ENCODE measurements at regions of chr6 and their contacts with region 1.

Region 1: DNA sequence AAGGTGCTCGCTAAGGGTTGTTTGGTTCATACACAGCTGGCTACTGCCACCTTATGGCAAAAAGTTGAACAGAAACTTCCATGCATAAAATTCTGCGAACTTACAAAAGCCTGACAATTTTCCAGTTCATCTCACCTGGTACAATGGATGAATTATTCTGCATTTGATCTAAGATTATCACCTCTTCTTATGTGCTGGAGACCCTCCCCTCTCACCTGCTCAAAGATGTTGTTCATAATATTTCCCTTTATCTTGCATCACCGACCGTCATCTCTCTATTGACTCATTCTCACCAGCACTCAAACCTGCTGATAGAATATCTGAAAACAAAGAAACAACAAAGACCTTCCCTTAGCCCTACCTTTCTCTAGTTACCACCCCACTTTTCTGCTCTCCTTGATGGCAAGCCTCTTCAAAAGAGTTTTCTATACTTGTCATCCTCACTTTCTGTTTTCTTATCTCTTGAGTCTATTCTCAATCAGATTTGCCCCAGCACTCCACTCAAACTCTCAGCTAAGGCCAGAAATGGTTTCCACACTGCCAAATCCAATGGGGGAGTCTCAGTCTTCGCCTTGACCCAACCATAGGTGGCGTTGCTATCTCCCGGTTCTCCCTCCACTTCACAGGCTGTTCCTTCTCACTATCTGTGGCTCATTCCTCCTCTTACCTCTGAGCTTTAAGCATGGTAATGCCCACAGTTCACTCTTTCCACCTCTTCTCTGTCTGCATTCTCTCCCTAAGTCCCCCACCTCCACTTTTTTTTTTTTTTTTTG is 25.8 kb downstream of the SNRNP48 start:
- DNase-seq: peak; percentile 75
- H3K4me3 Mint-ChIP-seq: peak overlapping the region; percentile 26
- H3K27ac Mint-ChIP-seq: no peak overlapping the region
- H3K4me1 Mint-ChIP-seq: peaks cover 28% of the 10 kb centered on the region
- H3K27me3 Mint-ChIP-seq: no peaks in the 10 kb centered on the region
- CTCF ChIP-seq: peak; percentile 87

Region 2: GRCh38 chr6:6676910-6677441 is 938.8 kb before region 1 on chr6:
- CTCF ChIA-PET with region 1: no interaction called
- POLR2A ChIA-PET with region 1: no interaction called
- intact Hi-C with region 1: loop called (anchors 1 kb)
- DNase-seq: peak; percentile 88
- H3K4me3 Mint-ChIP-seq: no peak overlapping the region
- H3K27ac Mint-ChIP-seq: no peak overlapping the region
- H3K4me1 Mint-ChIP-seq: peaks cover 23% of the 10 kb centered on the region
- H3K27me3 Mint-ChIP-seq: no peaks in the 10 kb centered on the region
- CTCF ChIP-seq: peak; percentile 92

Region 3: DNA sequence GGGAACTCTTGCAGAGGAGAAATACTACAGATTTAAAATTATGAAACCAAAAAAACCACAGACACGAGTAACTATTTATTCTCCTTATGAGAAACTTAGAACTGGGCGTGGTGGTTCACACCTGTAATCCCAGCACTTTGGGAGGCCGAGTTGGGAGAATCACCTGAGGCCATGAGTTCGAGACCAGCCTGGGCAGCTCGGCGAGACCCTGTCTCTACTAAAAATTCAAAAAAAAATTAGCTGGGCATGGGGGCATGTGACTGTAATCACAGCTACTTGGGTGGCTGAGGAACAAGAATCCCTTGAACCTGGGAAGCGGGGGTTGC is 339.6 kb before region 1 on chr6:
- CTCF ChIA-PET with region 1: interaction called, 61 read pairs
- POLR2A ChIA-PET with region 1: interaction called, 6 read pairs
- intact Hi-C with region 1: loop called (anchors 1 kb)
- DNase-seq: no peak
- H3K4me3 Mint-ChIP-seq: no peak overlapping the region
- H3K27ac Mint-ChIP-seq: no peak overlapping the region
- H3K4me1 Mint-ChIP-seq: peaks cover 14% of the 10 kb centered on the region
- H3K27me3 Mint-ChIP-seq: no peaks in the 10 kb centered on the region
- CTCF ChIP-seq: no peak

Region 4: DNA sequence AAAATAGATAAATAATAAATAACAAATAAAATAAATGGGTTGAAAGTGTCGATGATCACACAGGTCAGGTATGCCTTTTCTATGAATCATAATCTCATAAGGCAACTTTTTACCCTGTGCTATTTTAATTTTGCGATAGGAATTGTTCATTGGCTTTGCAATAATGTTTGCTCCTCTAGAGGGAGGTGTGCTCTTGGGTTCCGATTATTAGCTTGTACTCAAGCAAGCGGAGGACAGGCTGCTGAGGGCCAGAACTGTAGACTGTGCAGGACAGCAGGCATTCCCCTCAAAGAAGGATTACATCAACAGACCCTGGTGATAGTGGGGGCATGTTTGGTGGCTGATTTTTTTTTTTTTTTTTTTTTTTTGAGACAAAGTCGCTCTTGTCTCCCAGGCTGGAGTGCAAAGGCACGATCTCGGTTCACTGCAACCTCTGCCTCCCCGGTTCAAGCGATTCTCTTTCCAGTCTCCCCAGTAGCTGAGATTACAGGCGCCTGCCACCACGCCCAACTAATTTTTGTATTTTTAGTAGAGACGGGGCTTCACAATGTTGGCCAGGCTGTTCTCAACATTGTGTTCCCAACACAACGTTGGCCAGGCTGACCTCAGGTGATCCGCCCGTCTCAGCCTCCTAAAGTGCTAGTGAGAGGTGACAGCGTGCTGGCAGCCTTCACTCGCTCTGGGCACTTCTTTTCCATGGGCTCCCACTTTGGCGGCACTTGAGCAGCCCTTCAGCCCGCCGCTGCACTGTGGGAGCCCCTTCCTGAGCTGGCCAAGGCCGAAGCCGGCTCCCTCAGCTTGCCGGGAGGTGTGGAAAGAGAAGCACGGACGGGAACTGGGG is 190.6 kb before region 1 on chr6:
- CTCF ChIA-PET with region 1: no interaction called
- POLR2A ChIA-PET with region 1: no interaction called
- intact Hi-C with region 1: loop called (anchors 1 kb)
- DNase-seq: peak; percentile 80
- H3K4me3 Mint-ChIP-seq: no peak overlapping the region
- H3K27ac Mint-ChIP-seq: no peak overlapping the region
- H3K4me1 Mint-ChIP-seq: no peaks in the 10 kb centered on the region
- H3K27me3 Mint-ChIP-seq: no peaks in the 10 kb centered on the region
- CTCF ChIP-seq: peak; percentile 61

Region 5: GRCh38 chr6:7725849-7726415 is 110.1 kb after region 1 on chr6 and contains the start of gene BMP6:
- CTCF ChIA-PET with region 1: interaction called, 5 read pairs
- POLR2A ChIA-PET with region 1: interaction called, 5 read pairs
- intact Hi-C with region 1: loop called (anchors 5 kb)
- DNase-seq: peak; percentile 90
- H3K4me3 Mint-ChIP-seq: peak within 1 kb of the TSS; percentile 79
- H3K27ac Mint-ChIP-seq: no peak within 1 kb of the TSS
- H3K4me1 Mint-ChIP-seq: peaks cover 8% of the 10 kb centered on the region
- H3K27me3 Mint-ChIP-seq: peaks cover 53% of the 10 kb centered on the region
- CTCF ChIP-seq: no peak
- total RNA-seq, gene BMP6: 0.12 and 0.56 TPM in 2 replicates

Region 6: GRCh38 chr6:7758456-7758855 is 142.7 kb after region 1 on chr6:
- CTCF ChIA-PET with region 1: no interaction called
- POLR2A ChIA-PET with region 1: no interaction called
- intact Hi-C with region 1: no loop called
- DNase-seq: peak; percentile 72
- H3K4me3 Mint-ChIP-seq: no peak overlapping the region
- H3K27ac Mint-ChIP-seq: no peak overlapping the region
- H3K4me1 Mint-ChIP-seq: peaks cover 23% of the 10 kb centered on the region
- H3K27me3 Mint-ChIP-seq: peaks cover 45% of the 10 kb centered on the region
- CTCF ChIP-seq: no peak

Region 7: DNA sequence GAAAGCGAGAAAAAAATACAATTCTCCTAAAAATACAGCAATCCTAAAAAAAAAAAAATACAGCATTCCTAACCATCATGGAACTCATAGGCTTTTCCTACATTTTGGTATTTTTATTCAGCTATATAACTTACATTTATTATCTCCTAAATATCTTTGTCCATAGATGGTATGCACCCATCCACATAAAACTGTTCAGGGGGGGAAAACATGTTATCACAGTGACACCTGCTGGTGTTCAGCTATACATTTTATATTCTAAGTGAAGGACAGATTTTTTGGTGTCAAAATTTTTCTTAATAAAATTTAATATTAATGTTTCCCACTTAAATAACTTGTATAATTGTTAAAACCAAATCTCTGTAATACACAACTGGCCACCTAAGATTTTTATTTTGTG is 390.4 kb after region 1 on chr6:
- CTCF ChIA-PET with region 1: interaction called, 4 read pairs
- POLR2A ChIA-PET with region 1: interaction called, 4 read pairs
- intact Hi-C with region 1: loop called (anchors 5 kb)
- DNase-seq: peak; percentile 49
- H3K4me3 Mint-ChIP-seq: no peak overlapping the region
- H3K27ac Mint-ChIP-seq: no peak overlapping the region
- H3K4me1 Mint-ChIP-seq: no peaks in the 10 kb centered on the region
- H3K27me3 Mint-ChIP-seq: no peaks in the 10 kb centered on the region
- CTCF ChIP-seq: peak; percentile 38

Region 8: DNA sequence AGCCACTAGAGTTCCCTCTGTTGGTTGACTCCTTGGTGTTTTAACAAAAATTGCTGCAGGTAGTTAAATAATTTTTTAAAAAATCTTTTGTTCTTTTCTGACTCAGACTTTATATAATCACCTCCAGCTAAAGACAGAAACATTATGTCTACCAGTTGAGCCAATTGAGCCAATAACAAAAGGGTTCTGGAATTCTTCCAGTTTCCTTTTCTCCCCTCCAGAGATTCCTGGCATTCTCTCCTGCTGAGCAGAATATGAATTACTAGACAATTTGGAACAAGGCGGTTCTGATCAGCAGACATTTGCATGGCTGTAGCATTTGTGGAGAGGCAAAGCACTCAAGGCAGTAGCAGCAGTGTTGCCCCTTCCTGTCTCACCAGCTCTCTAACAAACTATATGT is 963.6 kb after region 1 on chr6:
- CTCF ChIA-PET with region 1: no interaction called
- POLR2A ChIA-PET with region 1: no interaction called
- intact Hi-C with region 1: no loop called
- DNase-seq: peak; percentile 47
- H3K4me3 Mint-ChIP-seq: no peak overlapping the region
- H3K27ac Mint-ChIP-seq: no peak overlapping the region
- H3K4me1 Mint-ChIP-seq: peaks cover 6% of the 10 kb centered on the region
- H3K27me3 Mint-ChIP-seq: no peaks in the 10 kb centered on the region
- CTCF ChIP-seq: no peak

Measured in MCF 10A (cell line).